Activated naive CD4-positive, alpha-beta T cell treated with anti-CD3 and anti-CD28 coated beads for 36 hours (primary cell): ENCODE measurements at regions of chr5 and their contacts with region 1.

Region 1: GRCh38 chr5:58886315-58887207 is 303.7 kb downstream of the RAB3C start:
- DNase-seq: peak; percentile 78
- H3K4me3 Mint-ChIP-seq: no peak overlapping the region
- H3K27ac Mint-ChIP-seq: peak overlapping the region; percentile 76
- H3K4me1 Mint-ChIP-seq: peaks cover 34% of the 10 kb centered on the region
- H3K27me3 Mint-ChIP-seq: peaks cover 5% of the 10 kb centered on the region

Region 2: DNA sequence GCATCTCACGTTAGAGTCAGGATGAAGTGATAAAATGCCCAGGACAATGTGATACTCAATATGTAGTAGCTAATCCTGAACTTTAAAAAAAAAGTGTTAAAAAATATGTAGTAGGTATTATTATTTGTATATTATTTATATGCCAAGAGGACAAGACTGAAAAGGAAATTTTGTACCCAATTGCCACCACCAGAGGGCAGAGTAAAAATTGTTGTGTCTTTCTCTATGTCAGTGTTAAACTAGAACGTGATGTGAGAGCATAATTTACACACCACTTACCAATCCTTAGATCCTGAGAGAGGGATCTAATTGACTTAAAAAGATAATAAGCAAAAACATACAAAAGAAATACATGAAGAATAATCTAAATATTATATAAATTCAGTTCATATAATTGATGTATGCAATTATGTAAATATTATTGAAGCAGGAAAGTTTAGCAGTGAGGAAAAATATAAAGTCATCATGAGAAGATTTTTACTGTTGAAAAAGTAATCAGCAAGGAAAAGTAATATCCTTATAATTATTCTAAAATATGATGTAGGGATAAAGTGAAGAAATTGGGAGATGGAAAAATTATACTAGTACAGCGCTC is 14.8 kb before region 1 on chr5:
- CTCF ChIA-PET with region 1: interaction called, 27 read pairs
- intact Hi-C with region 1: loop called (anchors 1 kb)
- DNase-seq: peak; percentile 61
- H3K4me3 Mint-ChIP-seq: no peak overlapping the region
- H3K27ac Mint-ChIP-seq: no peak overlapping the region
- H3K4me1 Mint-ChIP-seq: no peaks in the 10 kb centered on the region
- H3K27me3 Mint-ChIP-seq: no peaks in the 10 kb centered on the region

Region 3: DNA sequence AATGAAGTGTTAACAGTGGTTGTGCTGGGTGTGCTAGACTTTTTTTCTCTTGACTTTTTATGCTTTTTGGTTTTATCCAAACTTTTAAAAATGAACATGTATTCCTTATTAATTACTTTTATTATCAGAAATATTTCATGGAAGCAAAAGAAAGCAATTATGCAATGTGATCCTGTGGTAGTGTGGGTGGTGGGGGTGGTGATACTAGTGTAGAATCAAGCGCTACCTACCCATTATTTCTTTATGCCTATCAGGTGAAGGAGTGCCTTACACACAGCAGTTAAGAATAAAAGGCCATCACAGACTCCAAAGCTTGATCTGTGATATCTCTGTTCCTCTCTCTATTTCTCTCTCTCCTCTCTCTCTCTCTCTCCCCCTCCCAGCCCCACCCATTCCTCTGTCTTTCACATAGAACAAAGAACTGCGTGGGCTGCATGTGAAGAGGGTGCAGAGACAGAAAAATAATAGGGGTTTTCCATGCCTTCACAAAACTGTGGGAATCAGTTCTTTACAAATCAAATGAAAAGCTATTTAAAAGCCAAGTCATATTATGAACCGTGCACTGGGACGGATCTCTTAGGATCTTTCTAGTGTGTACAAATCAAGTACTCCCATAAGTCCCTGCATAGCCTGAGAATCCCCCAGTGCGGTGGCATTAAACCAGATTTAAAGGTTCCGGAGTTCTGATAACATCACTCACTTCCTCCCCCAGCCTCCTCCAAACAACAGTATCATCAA is 47.5 kb after region 1 on chr5:
- CTCF ChIA-PET with region 1: interaction called, 5 read pairs
- intact Hi-C with region 1: loop called (anchors 1 kb)
- DNase-seq: peak; percentile 76
- H3K4me3 Mint-ChIP-seq: peak overlapping the region; percentile 20
- H3K27ac Mint-ChIP-seq: peak overlapping the region; percentile 3
- H3K4me1 Mint-ChIP-seq: peaks cover 30% of the 10 kb centered on the region
- H3K27me3 Mint-ChIP-seq: no peaks in the 10 kb centered on the region

Region 4: DNA sequence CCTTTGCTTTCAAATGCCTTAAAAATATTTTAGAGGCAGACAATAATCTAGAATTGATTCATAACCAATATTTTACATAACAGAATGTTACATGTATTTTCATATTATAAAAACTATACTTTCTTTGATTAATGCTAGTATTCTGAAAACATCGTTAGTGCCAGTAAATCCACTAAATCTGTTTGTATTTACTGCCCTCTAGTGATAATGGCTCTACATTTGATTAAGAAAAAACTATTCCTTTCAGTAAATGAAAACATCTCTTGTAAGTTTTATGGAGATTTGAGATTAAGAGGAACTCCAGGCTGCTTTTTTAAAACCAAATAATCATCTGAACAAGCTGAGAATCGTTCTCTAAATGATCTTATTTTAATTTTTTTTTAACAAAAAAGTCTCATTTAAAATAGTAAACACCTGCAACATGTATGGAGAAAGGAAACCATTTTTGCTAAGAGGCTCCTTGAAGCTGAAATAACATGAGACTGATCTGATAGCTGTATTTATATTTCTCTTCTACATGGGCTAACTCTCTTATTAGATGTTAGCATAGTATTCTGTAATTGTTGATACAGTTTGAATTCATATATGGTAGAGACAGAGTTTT is 121.0 kb after region 1 on chr5:
- CTCF ChIA-PET with region 1: interaction called, 21 read pairs
- intact Hi-C with region 1: loop called (anchors 1 kb)
- DNase-seq: no peak
- H3K4me3 Mint-ChIP-seq: no peak overlapping the region
- H3K27ac Mint-ChIP-seq: no peak overlapping the region
- H3K4me1 Mint-ChIP-seq: peaks cover 60% of the 10 kb centered on the region
- H3K27me3 Mint-ChIP-seq: no peaks in the 10 kb centered on the region

Region 5: DNA sequence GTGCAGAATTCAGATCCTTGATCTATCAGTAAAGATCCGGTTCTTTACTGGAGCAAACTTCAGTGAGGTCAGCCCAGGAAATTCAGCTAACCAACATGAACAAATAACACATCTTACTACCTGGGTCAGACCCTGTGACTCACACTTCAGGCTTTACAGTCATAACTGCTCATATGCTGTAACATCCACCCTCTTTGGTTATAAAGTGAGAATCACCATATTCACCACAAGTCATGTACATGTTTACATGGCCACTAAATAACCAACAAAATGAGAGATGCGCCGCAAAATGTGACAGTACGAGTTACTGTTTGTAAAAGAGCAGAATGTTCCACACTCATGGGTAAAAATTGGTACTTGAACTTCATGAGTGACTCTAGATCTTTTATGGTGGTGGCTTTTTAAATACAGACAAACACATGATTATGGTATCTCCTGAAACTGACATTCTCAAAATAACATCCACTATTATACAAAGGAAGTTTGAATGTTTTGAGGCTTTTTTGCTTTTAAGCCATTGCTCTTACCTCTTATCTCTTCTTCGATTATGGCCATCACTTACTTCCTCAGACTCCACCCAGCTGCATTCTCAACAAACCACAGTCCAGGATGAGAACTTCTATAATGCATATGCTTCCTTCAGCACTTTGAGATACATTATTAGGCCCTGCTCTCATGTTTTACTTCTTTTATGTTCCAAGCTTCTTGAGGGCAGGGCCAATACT is 212.9 kb after region 1 on chr5:
- CTCF ChIA-PET with region 1: interaction called, 3 read pairs
- intact Hi-C with region 1: loop called (anchors 1 kb)
- DNase-seq: peak; percentile 68
- H3K4me3 Mint-ChIP-seq: no peak overlapping the region
- H3K27ac Mint-ChIP-seq: peak overlapping the region; percentile 20
- H3K4me1 Mint-ChIP-seq: peaks cover 32% of the 10 kb centered on the region
- H3K27me3 Mint-ChIP-seq: no peaks in the 10 kb centered on the region

Region 6: DNA sequence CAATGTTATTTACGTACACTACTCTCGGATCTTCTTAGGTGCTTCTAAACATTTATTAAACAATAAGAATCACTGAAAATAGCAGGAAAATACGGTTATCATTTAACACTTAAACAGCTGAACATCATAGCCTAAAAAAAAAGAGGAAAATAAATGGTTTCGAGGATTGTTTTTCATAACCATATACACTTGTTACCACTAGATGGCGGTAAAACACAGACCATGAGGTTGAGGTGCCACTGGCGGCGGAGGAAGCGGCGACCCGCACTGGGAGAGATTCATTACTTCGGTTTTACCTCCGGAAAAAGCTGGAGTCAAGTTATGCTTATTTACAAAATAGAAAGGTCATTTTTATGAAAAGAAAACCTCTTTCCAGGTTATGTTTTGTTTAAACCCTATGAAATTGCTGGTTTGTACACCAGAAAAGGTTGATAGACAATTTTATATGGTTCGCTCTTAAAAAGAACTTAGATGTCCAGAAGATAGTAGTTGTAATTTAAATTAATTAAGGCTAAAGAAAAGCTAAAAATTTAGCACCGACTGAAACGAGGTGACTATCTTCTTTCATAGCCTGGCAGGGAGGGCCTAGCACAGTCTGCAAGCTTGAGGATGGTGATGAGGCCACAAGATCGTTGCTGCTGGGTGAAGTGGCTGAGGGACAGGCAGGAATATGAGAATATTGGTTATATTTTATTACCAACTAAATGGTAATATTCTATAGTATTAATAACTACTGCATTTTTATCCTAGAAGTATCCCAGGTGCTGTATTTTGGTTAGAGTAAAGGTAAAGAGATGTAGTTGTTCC is 302.1 kb after region 1 on chr5:
- CTCF ChIA-PET with region 1: interaction called, 15 read pairs
- intact Hi-C with region 1: loop called (anchors 1 kb)
- DNase-seq: peak; percentile 71
- H3K4me3 Mint-ChIP-seq: no peak overlapping the region
- H3K27ac Mint-ChIP-seq: no peak overlapping the region
- H3K4me1 Mint-ChIP-seq: no peaks in the 10 kb centered on the region
- H3K27me3 Mint-ChIP-seq: peaks cover 5% of the 10 kb centered on the region

Region 7: DNA sequence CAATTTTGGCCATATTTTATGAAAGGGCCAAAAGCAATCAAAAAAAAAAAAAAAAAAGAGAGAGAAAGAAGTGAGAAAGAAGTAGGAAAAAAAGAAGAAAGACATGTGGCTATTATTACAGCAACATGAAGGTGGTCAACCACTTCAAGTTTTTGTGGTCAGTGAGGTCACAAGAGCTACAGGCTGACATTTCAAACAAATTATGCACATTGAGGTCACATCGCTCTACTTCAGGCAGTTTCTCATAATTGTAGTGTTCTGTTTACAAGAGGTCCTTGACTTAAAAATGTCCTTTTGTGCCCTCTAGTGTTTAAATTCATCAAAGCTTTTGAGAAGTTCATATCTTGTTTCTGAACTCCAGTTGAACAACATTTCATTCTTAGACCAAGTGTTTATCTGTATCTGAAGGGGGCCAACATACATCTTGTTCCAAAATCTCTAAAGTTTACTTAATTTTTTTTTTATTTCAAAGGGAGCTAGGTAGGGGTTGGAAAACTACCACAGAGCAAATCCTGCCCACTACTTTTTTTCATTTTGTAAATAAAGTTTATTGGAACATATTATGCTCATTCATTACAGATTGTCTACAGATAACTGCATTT is 493.9 kb after region 1 on chr5:
- CTCF ChIA-PET with region 1: interaction called, 5 read pairs
- intact Hi-C with region 1: loop called (anchors 1 kb)
- DNase-seq: peak; percentile 15
- H3K4me3 Mint-ChIP-seq: no peak overlapping the region
- H3K27ac Mint-ChIP-seq: no peak overlapping the region
- H3K4me1 Mint-ChIP-seq: no peaks in the 10 kb centered on the region
- H3K27me3 Mint-ChIP-seq: no peaks in the 10 kb centered on the region